Transverse colon (tissue), 4 donors: ENCODE measurements at regions of chr6 and their contacts with region 1.

Region 1: GRCh38 chr6:165456286-165456685 is 146.9 kb upstream of the C6orf118 start:
- DNase-seq: no peak
- H3K4me3 ChIP-seq: no peak overlapping the region
- H3K27ac ChIP-seq: no peak overlapping the region
- H3K4me1 ChIP-seq: no peaks in the 10 kb centered on the region
- H3K27me3 ChIP-seq: no peaks in the 10 kb centered on the region
- CTCF ChIP-seq: no peak
- EP300 ChIP-seq: no peak
- POLR2A ChIP-seq: no peak

Region 2: DNA sequence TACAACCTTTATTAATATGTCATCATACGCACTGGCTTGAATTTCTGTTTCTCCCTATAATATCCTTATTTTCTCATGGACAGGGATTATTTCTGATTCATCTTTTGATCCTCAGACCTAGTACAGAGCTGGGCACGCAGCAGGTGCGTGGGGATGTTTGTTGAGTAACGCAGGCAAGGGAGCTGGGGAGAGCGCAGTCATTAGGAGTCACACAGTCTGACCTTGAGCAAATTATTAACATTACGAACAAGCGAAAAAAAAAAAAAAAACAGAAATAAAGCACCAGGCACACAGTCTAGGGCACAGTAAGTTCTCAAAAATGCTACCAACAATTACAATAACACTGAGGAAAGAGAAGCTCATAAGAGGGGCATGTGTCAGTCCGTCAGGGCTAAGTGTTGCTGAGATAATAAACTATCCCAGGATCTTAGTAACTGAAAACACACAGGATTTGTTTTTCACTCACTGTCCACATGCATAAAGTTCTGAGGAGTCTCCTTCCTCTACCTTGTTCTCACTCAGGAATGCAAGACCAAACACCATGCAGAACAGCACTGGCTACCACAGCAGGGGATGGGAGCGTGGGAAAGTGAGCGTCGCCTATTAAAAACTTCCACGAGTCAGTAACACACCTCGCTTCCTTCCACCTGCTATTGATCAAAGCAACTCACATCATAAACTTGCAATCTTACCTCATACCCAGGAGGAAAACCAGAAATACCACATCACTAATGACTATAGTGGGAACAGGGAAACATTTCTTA is 149.8 kb after region 1 on chr6:
- in situ Hi-C with region 1: no loop called
- intact Hi-C with region 1: no loop called
- DNase-seq: no peak
- H3K4me3 ChIP-seq: no peak overlapping the region
- H3K27ac ChIP-seq: no peak overlapping the region
- H3K4me1 ChIP-seq: no peaks in the 10 kb centered on the region
- H3K27me3 ChIP-seq: no peaks in the 10 kb centered on the region
- CTCF ChIP-seq: no peak
- EP300 ChIP-seq: no peak
- POLR2A ChIP-seq: no peak

Region 3: DNA sequence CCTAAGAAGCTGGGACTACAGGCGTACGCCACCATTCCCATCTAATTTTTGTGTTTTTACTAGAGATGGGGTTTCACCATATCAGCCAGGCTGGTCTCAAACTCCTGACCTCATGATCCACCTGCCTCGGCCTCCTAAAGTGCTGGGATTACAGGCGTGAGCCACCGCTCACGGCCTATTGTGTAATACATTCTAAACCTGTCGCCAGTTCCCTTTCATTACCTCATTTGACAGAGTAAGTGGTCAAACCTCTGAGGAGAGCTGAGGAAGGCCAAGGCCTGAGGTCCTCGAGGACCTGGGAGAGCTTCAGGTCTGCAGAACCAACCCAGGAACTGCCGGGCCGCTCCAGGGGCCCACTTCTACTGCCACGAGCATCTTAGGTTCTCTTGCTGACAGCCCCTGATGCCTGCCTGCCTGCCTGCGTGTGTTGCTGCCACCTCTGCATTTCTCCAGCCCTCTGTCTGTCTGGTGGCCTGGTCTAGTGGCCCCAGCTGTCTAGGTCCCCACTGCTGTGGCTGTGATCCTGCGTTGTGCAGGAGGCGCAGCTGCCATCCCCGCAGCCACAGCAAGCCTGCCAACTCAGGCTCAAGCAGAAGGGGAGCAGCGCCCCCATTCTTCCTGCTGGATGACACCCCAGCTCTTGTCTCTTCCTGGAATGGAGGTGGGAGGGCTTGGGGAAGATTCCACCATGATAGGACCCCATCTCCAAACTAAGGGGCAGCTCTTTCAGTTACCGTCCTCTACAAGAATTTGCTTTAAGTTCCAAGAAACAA is 806.6 kb after region 1 on chr6:
- in situ Hi-C with region 1: no loop called
- intact Hi-C with region 1: loop called (anchors 5 kb)
- DNase-seq: no peak
- H3K4me3 ChIP-seq: no peak overlapping the region
- H3K27ac ChIP-seq: no peak overlapping the region
- H3K4me1 ChIP-seq: no peaks in the 10 kb centered on the region
- H3K27me3 ChIP-seq: peaks cover 2% of the 10 kb centered on the region
- CTCF ChIP-seq: no peak
- EP300 ChIP-seq: no peak
- POLR2A ChIP-seq: no peak